Heart left ventricle (tissue), 16 donors: ENCODE measurements at regions of chr18 and their contacts with region 1.

Region 1: GRCh38 chr18:48022531-48023329 is 92.3 kb upstream of the SMAD2 start:
- DNase-seq: no peak
- ATAC-seq: peak; percentile 53 to 82 (median 68)
- H3K4me3 ChIP-seq: no peak overlapping the region
- H3K27ac ChIP-seq: no peak overlapping the region
- H3K4me1 ChIP-seq: peaks cover 0 to 29% (median 14%) of the 10 kb centered on the region in 12 donors
- H3K27me3 ChIP-seq: peaks cover 0 to 9% (median 0%) of the 10 kb centered on the region in 9 donors
- CTCF ChIP-seq: peak; percentile 42 to 71 (median 56)
- POLR2A ChIP-seq: no peak

Region 2: GRCh38 chr18:47772374-47773248 is 250.1 kb before region 1 on chr18:
- intact Hi-C with region 1: loop called (anchors 1 to 5 kb)
- DNase-seq: peak in 3 of 5 donors; percentile 29 to 80 (median 43)
- ATAC-seq: peak in 3 of 4 donors; percentile 71 to 76 (median 72)
- H3K4me3 ChIP-seq: no peak overlapping the region
- H3K27ac ChIP-seq: no peak overlapping the region
- H3K4me1 ChIP-seq: no peaks in the 10 kb centered on the region
- H3K27me3 ChIP-seq: peaks cover 0 to 4% (median 0%) of the 10 kb centered on the region in 9 donors
- CTCF ChIP-seq: peak; percentile 52 to 85 (median 66)
- POLR2A ChIP-seq: no peak

Region 3: DNA sequence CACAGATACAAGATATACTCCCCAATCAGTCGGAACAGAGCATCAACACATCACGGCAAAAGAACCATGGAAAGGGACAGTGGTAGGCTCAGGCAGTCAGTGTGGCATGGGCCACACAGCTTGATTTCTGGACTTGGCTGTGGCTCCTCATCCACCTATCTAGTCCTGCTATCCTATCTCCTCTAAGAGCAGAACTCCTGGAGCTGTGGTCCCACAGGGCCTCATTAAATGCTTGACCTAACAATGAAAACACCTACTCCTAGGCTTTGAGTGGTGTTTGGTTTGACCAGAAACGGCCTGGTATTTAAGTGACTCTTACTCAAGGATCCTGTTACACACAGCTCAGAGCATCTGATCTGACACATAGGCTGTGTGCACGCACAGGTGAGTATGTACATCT is 58.7 kb before region 1 on chr18:
- intact Hi-C with region 1: no loop called
- DNase-seq: no peak
- ATAC-seq: no peak
- H3K4me3 ChIP-seq: no peak overlapping the region
- H3K27ac ChIP-seq: no peak overlapping the region
- H3K4me1 ChIP-seq: peaks cover 0 to 4% (median 0%) of the 10 kb centered on the region in 12 donors
- H3K27me3 ChIP-seq: no peaks in the 10 kb centered on the region
- CTCF ChIP-seq: no peak
- POLR2A ChIP-seq: no peak